Activated T-helper 2 cell treated with anti-CD3 and anti-CD28 coated beads, Interferon-gamma antibody, Interleukin-2, Interleukin-4, amounts not matched to agents 10 μg/mL and 5 μg/mL and 100 μg/mL, durations not matched to agents 14 hours and 24 hours and 36 hours (primary cell): ENCODE measurements at regions of chr16 and their contacts with region 1.

Region 1: DNA sequence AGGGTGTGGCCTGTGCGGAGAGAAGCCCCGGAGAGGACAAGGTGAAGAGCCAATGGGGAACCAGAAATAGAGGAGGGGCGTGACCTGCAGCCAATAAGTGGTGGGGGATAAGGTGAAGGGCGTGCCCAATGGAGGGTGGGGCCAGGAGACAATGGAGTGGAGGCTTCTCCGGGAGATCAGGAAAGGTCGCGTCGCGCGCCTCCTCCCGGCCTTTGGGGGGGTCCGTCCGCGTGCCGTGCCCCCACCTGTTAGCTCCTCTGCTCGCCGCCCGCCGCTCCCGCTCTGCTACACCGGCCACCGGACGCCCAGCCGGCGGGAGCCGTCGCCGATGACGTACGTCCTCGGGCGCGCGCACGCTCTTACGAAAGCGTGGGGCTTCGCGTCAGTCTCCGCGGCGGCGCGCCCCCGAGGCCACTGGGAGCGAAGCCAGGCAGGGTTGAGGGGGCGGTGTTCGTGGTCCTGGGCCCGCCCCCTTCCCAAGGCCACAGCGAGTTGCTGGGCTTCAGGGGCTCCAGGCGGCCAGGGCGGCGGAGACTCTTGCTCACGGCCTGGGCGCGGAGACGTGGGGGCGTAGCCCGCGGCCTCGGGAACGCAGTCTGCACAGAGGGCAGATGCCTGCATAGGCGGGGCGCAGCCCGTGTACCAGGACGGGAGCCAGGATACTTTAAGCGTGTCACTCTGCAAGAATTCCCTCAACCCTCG is at the start of gene MATCAP1:
- DNase-seq: peak; percentile 95
- H3K4me3 Mint-ChIP-seq: peak within 1 kb of the TSS; percentile 70
- H3K27ac Mint-ChIP-seq: no peak within 1 kb of the TSS
- H3K4me1 Mint-ChIP-seq: peaks cover 12% of the 10 kb centered on the region
- H3K27me3 Mint-ChIP-seq: peaks cover 7% of the 10 kb centered on the region
- total RNA-seq, gene MATCAP1: 57.1 and 59.5 TPM in 2 replicates

Region 2: DNA sequence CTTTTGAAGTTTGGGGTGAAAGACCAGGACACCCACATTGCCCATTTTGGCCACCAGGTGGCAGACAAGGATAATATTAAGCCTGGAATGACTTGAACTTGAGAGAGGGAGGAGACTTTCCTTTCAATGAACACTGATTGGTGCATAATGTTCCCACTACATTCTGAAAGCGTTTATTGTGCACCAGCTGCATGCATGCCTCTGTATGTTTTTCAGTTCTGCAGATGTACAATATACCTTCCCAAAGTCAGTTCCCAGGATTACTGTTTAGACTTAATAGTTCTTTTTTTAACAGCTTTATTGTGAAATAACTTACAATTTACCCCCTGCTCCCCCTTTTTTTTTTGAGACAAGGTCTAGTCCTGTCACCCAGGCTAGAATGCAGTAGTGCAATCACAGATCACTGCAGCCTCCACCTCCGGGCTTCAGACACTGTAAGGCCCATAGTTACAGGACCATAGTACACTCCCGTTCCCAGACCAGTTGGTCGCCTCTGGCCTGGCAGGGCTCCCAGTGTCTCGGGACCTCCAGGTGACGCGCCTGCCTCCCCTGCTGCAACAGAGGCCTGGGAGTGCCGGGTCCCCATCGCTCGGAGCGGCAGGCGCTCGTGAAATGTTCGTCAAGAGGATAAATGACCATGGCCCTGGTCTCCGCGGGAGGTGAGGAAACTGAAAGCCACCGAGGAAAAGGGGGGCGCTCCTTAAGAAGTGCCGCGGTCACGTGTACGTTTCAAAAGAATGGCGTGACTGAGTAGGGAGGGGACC is 236.3 kb before region 1 on chr16:
- intact Hi-C with region 1: loop called (anchors 2 kb)
- DNase-seq: peak; percentile 75
- H3K4me3 Mint-ChIP-seq: peak overlapping the region; percentile 78
- H3K27ac Mint-ChIP-seq: no peak overlapping the region
- H3K4me1 Mint-ChIP-seq: peaks cover 20% of the 10 kb centered on the region
- H3K27me3 Mint-ChIP-seq: peaks cover 33% of the 10 kb centered on the region

Region 3: DNA sequence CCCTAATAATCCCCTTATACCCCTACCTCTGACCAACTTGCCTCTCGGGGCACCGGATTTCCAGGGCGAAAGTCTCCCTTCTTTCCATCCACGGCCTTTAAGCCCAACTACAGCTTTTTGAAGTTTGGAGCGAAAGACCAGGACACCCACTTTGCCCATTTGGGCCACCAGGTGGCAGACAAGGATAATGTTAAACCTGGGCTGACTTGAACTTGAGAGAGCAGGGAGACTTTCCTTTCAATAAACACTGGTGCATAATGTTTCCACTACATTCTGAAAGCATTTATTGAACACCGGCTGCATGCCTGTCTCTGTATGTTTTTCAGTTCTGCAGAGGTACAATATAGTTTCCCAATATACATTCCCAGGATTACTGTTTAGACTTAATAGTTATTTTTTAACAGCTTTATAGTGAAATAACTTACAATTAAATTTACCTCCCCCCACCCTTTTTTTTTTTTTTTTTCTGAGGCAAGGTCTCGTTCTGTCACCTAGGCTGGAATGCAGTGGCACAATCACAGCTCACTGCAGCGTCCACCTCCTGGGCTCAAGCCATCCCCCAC is 229.6 kb before region 1 on chr16:
- intact Hi-C with region 1: loop called (anchors 2 kb)
- DNase-seq: peak; percentile 72
- H3K4me3 Mint-ChIP-seq: no peak overlapping the region
- H3K27ac Mint-ChIP-seq: no peak overlapping the region
- H3K4me1 Mint-ChIP-seq: peaks cover 18% of the 10 kb centered on the region
- H3K27me3 Mint-ChIP-seq: peaks cover 24% of the 10 kb centered on the region

Region 4: GRCh38 chr16:67150833-67151396 is 32.9 kb before region 1 on chr16 and contains the start of gene B3GNT9:
- intact Hi-C with region 1: loop called (anchors 5 kb)
- DNase-seq: no peak
- H3K4me3 Mint-ChIP-seq: peak within 1 kb of the TSS; percentile 74
- H3K27ac Mint-ChIP-seq: no peak within 1 kb of the TSS
- H3K4me1 Mint-ChIP-seq: peaks cover 21% of the 10 kb centered on the region
- H3K27me3 Mint-ChIP-seq: peaks cover 1% of the 10 kb centered on the region
- total RNA-seq, gene B3GNT9: 5.0 and 5.1 TPM in 2 replicates

Region 5: GRCh38 chr16:67226804-67227557 is 43.2 kb after region 1 on chr16 and contains the start of gene TMEM208:
- intact Hi-C with region 1: loop called (anchors 5 kb)
- DNase-seq: peak; percentile 99
- H3K4me3 Mint-ChIP-seq: peak within 1 kb of the TSS; percentile 98
- H3K27ac Mint-ChIP-seq: peak within 1 kb of the TSS; percentile 93
- H3K4me1 Mint-ChIP-seq: peaks cover 40% of the 10 kb centered on the region
- H3K27me3 Mint-ChIP-seq: no peaks in the 10 kb centered on the region
- total RNA-seq, gene TMEM208: 53.8 and 55.4 TPM in 2 replicates